ENCODE measurements at regions of chr1 and their contacts with region 1.

Region 1: GRCh38 chr1:201348211-201348566 is 29.3 kb downstream of the TNNT2 start:
- DNase-seq: no peak
- H3K4me3 ChIP-seq: no peak overlapping the region
- CTCF ChIP-seq: peak; percentile 78

Region 2: GRCh38 chr1:201282931-201283829 is 65.0 kb before region 1 on chr1 and contains the start of gene PKP1:
- CTCF ChIA-PET with region 1: interaction called, 32 read pairs
- POLR2A ChIA-PET with region 1: no interaction called
- DNase-seq: no peak
- H3K4me3 ChIP-seq: peak within 1 kb of the TSS; percentile 35
- CTCF ChIP-seq: no peak

Region 3: GRCh38 chr1:201310986-201311355 is 37.2 kb before region 1 on chr1:
- CTCF ChIA-PET with region 1: interaction called, 73 read pairs
- POLR2A ChIA-PET with region 1: no interaction called
- DNase-seq: no peak
- H3K4me3 ChIP-seq: no peak overlapping the region
- CTCF ChIP-seq: no peak

Region 4: GRCh38 chr1:201361652-201362504 is 13.7 kb after region 1 on chr1:
- CTCF ChIA-PET with region 1: interaction called, 195 read pairs
- POLR2A ChIA-PET with region 1: no interaction called
- DNase-seq: no peak
- H3K4me3 ChIP-seq: no peak overlapping the region
- CTCF ChIP-seq: peak; percentile 88

Region 5: GRCh38 chr1:201408176-201408833 is 60.1 kb after region 1 on chr1:
- CTCF ChIA-PET with region 1: interaction called, 195 read pairs
- POLR2A ChIA-PET with region 1: no interaction called
- DNase-seq: peak; percentile 10
- H3K4me3 ChIP-seq: no peak overlapping the region
- CTCF ChIP-seq: peak; percentile 99